ENCODE measurements at regions of chr14 and their contacts with region 1.

Region 1: DNA sequence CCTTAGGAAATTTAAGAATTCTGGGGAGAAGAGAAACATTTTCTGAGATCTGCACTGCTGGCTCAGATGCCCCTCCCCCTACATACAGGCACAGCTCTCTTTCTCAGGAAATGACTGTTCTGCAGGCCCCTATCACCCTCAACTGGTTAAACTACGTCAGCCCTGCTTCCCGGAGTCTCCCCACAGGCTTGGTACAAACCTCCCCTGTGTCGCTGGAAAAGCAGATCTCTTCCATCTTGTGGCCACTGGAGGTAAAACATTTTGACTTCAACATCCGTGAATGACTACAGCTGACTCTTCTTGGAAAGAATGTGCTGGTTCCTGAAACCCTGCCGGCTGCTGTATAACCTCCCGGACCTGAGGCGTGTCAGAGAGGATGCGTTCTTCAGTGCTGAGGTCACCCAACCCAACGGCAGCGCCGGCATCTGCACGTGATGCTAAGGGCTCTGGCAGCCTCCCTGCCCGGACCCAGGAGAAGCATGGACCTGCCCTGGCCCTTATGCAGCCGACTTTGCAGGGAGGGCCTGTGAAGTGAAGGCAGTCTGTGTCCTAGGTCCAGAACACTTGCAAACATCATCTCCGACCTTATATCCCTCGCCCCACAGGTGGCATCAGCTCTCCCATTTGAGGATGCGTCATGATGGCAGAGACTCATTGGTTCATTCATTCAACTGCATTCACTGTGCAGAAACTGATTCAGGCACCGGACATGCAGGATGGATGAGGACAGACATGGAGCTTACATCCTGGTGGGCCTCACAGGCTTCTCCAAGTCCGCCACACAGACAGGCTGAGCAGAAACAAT is 129.3 kb downstream of the GCH1 start:
- DNase-seq: peak; percentile 63 to 92 (median 73)
- H3K4me3 ChIP-seq: peak overlapping the region in 1 of 2 donors; percentile 53
- H3K4me3 Mint-ChIP-seq: peak overlapping the region; percentile 16 to 83 (median 61)
- H3K27ac ChIP-seq: peak overlapping the region; percentile 55
- H3K27ac Mint-ChIP-seq: peak overlapping the region; percentile 82 to 98 (median 89)
- H3K4me1 ChIP-seq: peaks cover 22% of the 10 kb centered on the region
- H3K4me1 Mint-ChIP-seq: peaks cover 18 to 30% (median 22%) of the 10 kb centered on the region in 4 donors
- H3K27me3 ChIP-seq: no peaks in the 10 kb centered on the region
- H3K27me3 Mint-ChIP-seq: peaks cover 1 to 3% of the 10 kb centered on the region in 2 donors

Region 2: DNA sequence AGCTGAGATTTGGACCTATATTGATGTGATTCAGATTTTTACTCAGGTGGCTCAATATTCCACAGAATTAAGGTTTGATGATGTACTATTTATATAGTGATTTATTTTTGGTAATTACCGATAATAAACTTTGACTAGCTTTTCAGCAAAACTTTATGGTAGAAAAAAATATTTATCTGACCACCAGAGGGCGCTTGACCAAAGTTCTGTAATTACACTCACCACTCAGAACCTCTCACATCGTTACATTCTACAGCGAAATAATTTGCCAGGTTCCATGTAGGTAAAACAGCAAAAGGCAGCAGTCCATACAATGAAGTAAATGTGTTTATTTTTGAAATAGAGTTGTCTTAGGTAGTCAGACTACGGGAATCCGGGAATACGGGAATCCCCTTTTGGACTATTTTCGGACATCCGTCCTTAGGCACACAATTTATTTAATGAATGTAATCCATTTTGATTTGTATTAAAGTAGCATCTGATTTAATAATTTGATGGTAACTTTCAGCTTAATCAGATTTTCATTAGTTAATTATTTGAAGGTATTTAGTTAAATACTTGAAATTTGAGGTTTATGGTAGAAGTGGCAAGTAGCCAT is 1477.3 kb before region 1 on chr14:
- CTCF ChIA-PET with region 1: interaction called, 3 read pairs
- POLR2A ChIA-PET with region 1: no interaction called
- intact Hi-C with region 1: loop called (anchors 5 kb)
- DNase-seq: peak in 4 of 5 donors; percentile 35 to 39 (median 37)
- H3K4me3 ChIP-seq: no peak overlapping the region
- H3K4me3 Mint-ChIP-seq: no peak overlapping the region
- H3K27ac ChIP-seq: no peak overlapping the region
- H3K27ac Mint-ChIP-seq: no peak overlapping the region
- H3K4me1 ChIP-seq: no peaks in the 10 kb centered on the region
- H3K4me1 Mint-ChIP-seq: no peaks in the 10 kb centered on the region
- H3K27me3 ChIP-seq: no peaks in the 10 kb centered on the region
- H3K27me3 Mint-ChIP-seq: no peaks in the 10 kb centered on the region

Region 3: GRCh38 chr14:54488646-54489317 is 284.6 kb before region 1 on chr14 and contains the start of gene GMFB:
- CTCF ChIA-PET with region 1: interaction called, 11 read pairs
- POLR2A ChIA-PET with region 1: no interaction called
- intact Hi-C with region 1: loop called (anchors 5 kb)
- DNase-seq: peak; percentile 84 to 88 (median 87)
- H3K4me3 ChIP-seq: peak within 1 kb of the TSS; percentile 50 to 66
- H3K4me3 Mint-ChIP-seq: peak within 1 kb of the TSS; percentile 85 to 97 (median 94)
- H3K27ac ChIP-seq: peak within 1 kb of the TSS; percentile 80
- H3K27ac Mint-ChIP-seq: peak within 1 kb of the TSS; percentile 89 to 99 (median 97)
- H3K4me1 ChIP-seq: peaks cover 57% of the 10 kb centered on the region
- H3K4me1 Mint-ChIP-seq: peaks cover 48 to 70% (median 57%) of the 10 kb centered on the region in 4 donors
- H3K27me3 ChIP-seq: no peaks in the 10 kb centered on the region
- H3K27me3 Mint-ChIP-seq: no peaks in the 10 kb centered on the region
- total RNA-seq, gene GMFB: 31.1 to 36.4 TPM

Region 4: DNA sequence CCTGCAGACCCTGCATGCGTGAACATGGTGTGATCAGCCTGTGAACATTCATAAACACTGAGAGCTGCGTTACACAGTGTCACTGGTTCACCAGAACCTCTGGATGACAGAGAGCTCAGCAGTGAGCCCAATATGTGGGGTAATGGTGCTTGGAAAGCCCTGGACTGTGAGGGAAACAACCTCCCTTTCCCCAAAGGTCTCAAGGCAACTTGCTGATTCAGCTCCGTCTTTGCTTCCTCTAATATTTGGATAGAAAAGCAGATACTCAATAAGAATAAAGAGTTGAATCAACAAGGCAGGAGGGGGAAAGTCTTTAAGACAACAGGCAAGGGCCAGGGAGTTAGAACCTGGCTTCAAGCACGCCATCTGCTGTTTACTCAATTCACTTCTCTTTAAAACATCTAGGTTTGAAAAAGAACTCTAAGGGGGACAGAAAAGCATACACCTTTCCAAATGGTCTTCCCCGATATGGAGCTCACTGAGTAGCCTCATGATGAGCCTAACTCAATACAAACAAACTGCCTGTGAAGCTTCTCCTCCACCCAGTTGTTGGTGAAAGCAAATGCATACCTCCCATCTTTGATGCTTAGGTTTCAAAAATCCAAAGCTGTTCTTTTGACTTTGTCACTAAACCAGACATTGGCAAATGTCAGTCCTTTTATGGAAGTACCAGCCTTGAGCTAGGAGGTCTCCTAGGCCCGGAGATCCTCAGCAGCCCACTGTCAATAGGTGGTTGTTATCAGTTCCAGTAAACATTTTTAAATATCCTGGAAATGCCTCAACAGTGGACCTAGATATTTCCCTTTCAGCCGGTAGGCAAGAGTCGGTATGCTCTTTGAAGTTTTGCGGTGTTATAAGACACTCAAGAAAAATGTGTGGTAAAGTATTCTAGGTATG is 130.3 kb before region 1 on chr14:
- CTCF ChIA-PET with region 1: interaction called, 7 read pairs
- POLR2A ChIA-PET with region 1: no interaction called
- intact Hi-C with region 1: loop called (anchors 10 kb)
- DNase-seq: peak in 4 of 5 donors; percentile 26 to 40 (median 28)
- H3K4me3 ChIP-seq: no peak overlapping the region
- H3K4me3 Mint-ChIP-seq: no peak overlapping the region
- H3K27ac ChIP-seq: no peak overlapping the region
- H3K27ac Mint-ChIP-seq: no peak overlapping the region
- H3K4me1 ChIP-seq: no peaks in the 10 kb centered on the region
- H3K4me1 Mint-ChIP-seq: no peaks in the 10 kb centered on the region
- H3K27me3 ChIP-seq: no peaks in the 10 kb centered on the region
- H3K27me3 Mint-ChIP-seq: no peaks in the 10 kb centered on the region

Region 5: DNA sequence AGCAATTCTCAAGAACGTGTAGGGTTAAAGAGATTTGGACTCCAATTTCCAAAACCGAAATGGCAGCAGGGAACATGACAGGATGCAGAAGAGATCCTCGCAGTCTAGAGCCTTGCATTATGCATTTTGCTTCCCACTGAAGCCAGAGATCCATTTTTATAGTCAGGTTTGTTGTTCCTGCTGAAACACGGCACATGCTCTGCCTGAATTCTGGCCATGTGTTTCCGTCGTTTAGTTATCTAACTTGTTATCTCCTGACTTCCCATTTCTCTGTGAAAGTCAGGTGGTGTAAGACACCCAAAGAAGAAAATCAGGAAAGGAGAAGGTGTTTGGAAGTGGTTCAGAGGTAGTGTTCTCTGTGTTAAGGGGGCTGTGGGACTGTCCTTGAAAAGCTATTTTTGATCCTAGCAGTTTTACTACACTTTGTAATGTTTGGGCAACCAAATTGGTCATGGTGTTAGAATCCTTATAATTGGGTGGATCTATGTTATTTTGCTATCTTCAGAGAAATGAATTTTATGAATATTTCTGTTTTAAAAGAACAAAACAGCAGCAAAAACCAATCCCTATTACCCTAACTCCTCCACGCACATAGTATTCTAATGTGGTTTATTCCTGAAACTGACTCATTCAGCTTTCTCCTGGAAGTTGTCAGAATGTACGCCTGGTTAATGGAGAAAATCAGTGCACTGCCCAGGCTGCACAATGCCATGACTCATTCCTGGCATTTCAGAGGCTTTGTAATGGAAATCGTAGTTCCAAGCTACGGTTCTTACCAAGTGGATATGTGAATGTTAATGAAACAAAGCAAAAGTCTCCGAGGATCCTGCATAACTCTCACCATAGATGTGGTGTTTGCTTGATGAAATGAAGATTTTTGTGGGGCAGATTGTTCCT is 96.3 kb before region 1 on chr14:
- CTCF ChIA-PET with region 1: no interaction called
- POLR2A ChIA-PET with region 1: no interaction called
- intact Hi-C with region 1: no loop called
- DNase-seq: no peak
- H3K4me3 ChIP-seq: no peak overlapping the region
- H3K4me3 Mint-ChIP-seq: no peak overlapping the region
- H3K27ac ChIP-seq: no peak overlapping the region
- H3K27ac Mint-ChIP-seq: no peak overlapping the region
- H3K4me1 ChIP-seq: no peaks in the 10 kb centered on the region
- H3K4me1 Mint-ChIP-seq: peaks cover 0 to 3% (median 1%) of the 10 kb centered on the region in 4 donors
- H3K27me3 ChIP-seq: no peaks in the 10 kb centered on the region
- H3K27me3 Mint-ChIP-seq: peaks cover 0 to 1% of the 10 kb centered on the region in 2 donors

Region 6: DNA sequence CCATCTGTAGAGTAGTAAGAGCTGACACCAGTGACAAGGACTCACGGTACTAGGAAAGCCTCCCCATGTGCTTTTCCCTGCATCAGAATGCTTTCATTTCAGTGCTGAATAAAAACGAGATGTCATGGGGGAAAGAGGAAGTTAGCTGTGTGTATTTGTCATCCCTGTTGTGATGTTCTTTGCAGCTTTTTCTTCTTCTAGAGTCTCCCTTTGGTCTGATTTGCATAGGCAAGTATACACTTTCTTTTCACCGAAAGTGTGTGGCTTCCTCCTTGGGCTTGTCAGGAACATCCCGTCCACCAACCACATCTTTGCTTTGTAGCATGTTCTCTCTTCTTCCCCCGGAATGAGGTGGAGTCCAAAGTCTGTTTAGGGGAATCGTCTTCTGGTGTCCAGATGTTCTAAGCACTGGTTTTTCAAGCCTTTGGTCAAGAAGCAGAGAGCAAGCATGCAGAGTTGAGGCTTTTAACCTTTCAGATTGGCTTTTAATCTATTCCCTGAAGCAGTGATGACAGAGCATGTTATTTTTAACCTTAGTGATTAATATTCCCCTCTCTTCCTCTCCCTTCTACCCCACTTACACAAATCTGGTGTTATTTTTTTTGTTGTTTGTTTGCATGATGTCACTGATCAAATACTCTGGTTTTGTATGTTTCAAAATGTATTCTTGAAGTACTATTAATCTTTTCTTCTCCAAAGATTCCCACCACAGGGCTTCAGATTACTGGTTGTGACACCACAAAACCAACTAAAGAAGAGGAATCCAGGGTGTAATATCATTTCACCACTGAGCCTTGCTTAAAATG is 43.0 kb before region 1 on chr14:
- CTCF ChIA-PET with region 1: interaction called, 15 read pairs
- POLR2A ChIA-PET with region 1: no interaction called
- intact Hi-C with region 1: loop called (anchors 5 kb)
- DNase-seq: peak in 3 of 5 donors; percentile 8 to 10 (median 8)
- H3K4me3 ChIP-seq: peak overlapping the region in 1 of 2 donors; percentile 38
- H3K4me3 Mint-ChIP-seq: peak overlapping the region; percentile 7 to 77 (median 70)
- H3K27ac ChIP-seq: no peak overlapping the region
- H3K27ac Mint-ChIP-seq: peak overlapping the region in 6 of 7 donors; percentile 0 to 82 (median 33)
- H3K4me1 ChIP-seq: peaks cover 16% of the 10 kb centered on the region
- H3K4me1 Mint-ChIP-seq: peaks cover 11 to 14% (median 12%) of the 10 kb centered on the region in 4 donors
- H3K27me3 ChIP-seq: no peaks in the 10 kb centered on the region
- H3K27me3 Mint-ChIP-seq: peaks cover 0 to 4% of the 10 kb centered on the region in 2 donors

Region 7: DNA sequence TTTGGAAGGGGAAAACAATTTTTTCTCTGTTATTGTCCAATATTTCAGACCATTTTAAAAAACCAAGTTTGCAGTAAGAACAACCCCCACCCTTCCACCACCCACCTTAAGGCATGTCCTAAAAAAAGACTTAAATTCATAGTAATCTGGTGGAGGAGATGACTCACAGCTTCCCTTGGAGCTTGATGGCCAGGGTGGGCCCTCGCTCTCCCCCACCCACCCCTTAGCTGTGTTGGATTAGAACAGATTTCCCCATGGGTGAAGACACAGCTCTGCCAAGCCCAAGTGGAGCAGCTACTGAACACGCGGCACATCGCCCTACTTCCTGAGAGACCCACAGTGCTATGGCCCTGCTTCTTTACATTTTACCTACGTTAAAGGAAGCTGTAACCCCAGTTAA is 11.1 kb before region 1 on chr14:
- CTCF ChIA-PET with region 1: interaction called, 28 read pairs
- POLR2A ChIA-PET with region 1: no interaction called
- intact Hi-C with region 1: no loop called
- DNase-seq: no peak
- H3K4me3 ChIP-seq: no peak overlapping the region
- H3K4me3 Mint-ChIP-seq: no peak overlapping the region
- H3K27ac ChIP-seq: no peak overlapping the region
- H3K27ac Mint-ChIP-seq: peak overlapping the region in 2 of 7 donors; percentile 29 to 36
- H3K4me1 ChIP-seq: peaks cover 5% of the 10 kb centered on the region
- H3K4me1 Mint-ChIP-seq: peaks cover 6 to 7% (median 6%) of the 10 kb centered on the region in 4 donors
- H3K27me3 ChIP-seq: no peaks in the 10 kb centered on the region
- H3K27me3 Mint-ChIP-seq: no peaks in the 10 kb centered on the region

Region 8: GRCh38 chr14:54909817-54910558 is 136.6 kb after region 1 on chr14:
- CTCF ChIA-PET with region 1: no interaction called
- POLR2A ChIA-PET with region 1: no interaction called
- intact Hi-C with region 1: no loop called
- DNase-seq: no peak
- H3K4me3 ChIP-seq: no peak overlapping the region
- H3K4me3 Mint-ChIP-seq: no peak overlapping the region
- H3K27ac ChIP-seq: no peak overlapping the region
- H3K27ac Mint-ChIP-seq: peak overlapping the region in 1 of 7 donors; percentile 18
- H3K4me1 ChIP-seq: peaks cover 12% of the 10 kb centered on the region
- H3K4me1 Mint-ChIP-seq: peaks cover 7 to 13% (median 10%) of the 10 kb centered on the region in 4 donors
- H3K27me3 ChIP-seq: no peaks in the 10 kb centered on the region
- H3K27me3 Mint-ChIP-seq: no peaks in the 10 kb centered on the region

Measured in CD4-positive, alpha-beta memory T cell (primary cell).